H1 (cell line): ENCODE measurements at regions of chr7 and their contacts with region 1.

Region 1: DNA sequence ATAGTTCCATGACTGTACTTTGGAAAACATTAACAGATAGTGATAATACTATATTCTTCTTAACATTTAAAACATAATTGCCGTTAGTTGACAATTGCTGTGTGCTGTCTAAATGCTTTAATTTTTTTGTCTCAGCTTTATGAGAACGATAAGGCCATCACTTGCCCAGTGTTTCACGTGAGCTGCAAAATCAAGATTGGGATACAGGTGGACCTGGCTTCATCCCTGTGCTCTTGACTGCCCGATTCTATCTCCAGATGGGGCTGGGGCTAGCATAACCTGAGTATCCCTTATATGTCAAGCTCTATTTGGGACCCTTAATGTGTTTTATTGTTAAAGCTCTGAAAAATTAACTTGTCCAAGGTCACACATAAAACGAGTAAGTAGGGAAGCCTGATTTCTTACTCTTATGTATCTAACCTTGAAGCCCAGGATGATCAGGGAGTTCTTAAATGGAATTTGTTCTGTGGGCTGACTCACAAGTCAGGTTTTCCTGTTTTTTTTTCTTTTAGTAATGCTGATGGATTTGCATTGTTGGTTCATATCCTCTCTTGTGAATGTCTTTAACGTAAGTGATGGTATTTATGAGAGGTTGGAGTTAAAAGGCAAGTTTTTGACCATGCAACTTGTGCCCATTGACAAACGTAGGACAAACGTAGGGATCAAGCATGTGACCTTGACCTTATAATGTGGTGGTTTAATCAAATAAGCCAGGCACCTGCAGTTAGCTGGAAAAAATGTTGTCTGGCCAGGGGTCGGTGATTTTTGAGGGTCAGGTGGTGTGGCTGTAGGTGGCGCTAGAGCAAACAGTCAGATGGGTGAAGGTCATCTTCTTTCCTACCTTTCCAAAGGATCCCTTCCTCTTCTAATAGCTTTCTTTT is 3.6 kb downstream of the PRKAR2B start:
- DNase-seq: peak in 1 of 2 experiments; percentile 69
- H3K4me3 ChIP-seq: no peak overlapping the region
- H3K27ac ChIP-seq: no peak overlapping the region
- H3K4me1 ChIP-seq: peaks cover 2 to 6% (median 5%) of the 10 kb centered on the region in 4 experiments; a peak in 4 of 7 replicates
- H3K27me3 ChIP-seq: no peaks in the 10 kb centered on the region
- CTCF ChIP-seq: peak; percentile 60 to 80 (median 77)
- EP300 ChIP-seq: no peak
- POLR2A ChIP-seq: no peak
- RAD21 ChIP-seq: peak; percentile 50 to 59

Region 2: DNA sequence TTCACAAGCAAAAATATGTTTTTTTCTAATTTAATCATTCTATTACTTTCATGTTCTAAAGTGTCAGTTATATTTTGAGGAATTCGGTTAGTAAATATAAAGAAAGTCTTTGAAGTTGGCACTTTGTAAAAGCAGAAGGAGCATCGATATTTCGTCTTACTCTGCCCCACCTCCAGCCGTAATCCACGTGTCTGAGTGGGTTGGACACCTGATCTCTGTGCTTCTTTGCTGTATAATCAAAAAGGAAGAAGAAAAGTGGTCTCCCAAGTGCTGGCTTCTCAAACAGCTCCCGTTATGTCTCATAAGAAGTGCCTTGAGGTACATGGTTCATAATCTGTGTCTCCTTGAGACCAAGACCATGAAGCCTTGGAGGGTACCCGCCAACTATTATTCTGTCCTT is 16.1 kb after region 1 on chr7:
- CTCF ChIA-PET with region 1: interaction called, 15 read pairs
- POLR2A ChIA-PET with region 1: interaction called, 3 read pairs
- DNase-seq: no peak
- H3K4me3 ChIP-seq: no peak overlapping the region
- H3K27ac ChIP-seq: no peak overlapping the region
- H3K4me1 ChIP-seq: peaks cover 0 to 12% (median 4%) of the 10 kb centered on the region in 4 experiments; a peak in 6 of 7 replicates
- H3K27me3 ChIP-seq: no peaks in the 10 kb centered on the region
- CTCF ChIP-seq: no peak
- EP300 ChIP-seq: no peak
- POLR2A ChIP-seq: no peak
- RAD21 ChIP-seq: no peak

Region 3: DNA sequence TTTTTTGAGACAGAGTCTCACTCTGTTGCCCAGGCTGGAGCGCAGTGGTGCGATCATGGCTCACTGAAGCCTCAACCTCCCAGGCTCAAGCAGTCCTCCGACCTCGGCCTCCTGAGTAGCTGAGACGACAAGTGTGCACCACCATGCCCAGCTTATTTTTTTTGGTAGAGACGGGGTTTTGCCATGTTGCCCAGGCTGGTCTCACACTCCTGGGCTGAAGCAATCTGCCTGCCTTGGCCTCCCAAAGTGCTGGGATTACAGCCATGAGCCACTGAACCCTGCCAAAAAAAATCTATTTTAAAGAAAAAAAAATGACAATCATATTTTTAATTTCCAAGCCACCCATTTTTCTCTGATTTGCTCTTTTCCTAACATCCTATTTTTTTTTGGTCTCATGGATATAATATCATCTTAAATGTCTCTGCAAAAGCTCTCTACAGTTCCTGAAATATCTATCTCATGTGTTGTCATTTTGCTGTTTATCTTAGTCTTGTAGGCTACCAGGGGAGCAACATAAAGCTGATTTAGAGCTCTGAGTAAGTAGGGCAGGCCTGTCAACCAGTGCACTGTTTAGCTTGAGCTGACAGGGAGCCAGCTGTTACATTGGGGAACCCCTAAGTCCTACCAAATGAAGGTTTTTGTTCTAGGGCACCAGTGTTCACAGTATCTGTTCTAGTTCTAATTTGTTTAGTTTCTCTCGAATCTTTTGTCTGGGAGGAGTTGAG is 90.7 kb after region 1 on chr7:
- CTCF ChIA-PET with region 1: interaction called, 14 read pairs
- POLR2A ChIA-PET with region 1: no interaction called
- DNase-seq: no peak
- H3K4me3 ChIP-seq: no peak overlapping the region
- H3K27ac ChIP-seq: no peak overlapping the region
- H3K4me1 ChIP-seq: peaks cover 0 to 4% (median 0%) of the 10 kb centered on the region in 4 experiments; a peak in 2 of 7 replicates
- H3K27me3 ChIP-seq: no peaks in the 10 kb centered on the region
- CTCF ChIP-seq: no peak
- EP300 ChIP-seq: no peak
- POLR2A ChIP-seq: no peak
- RAD21 ChIP-seq: no peak